Psoas muscle (tissue), 8 donors: ENCODE measurements at regions of chr5 and their contacts with region 1.

Region 1: GRCh38 chr5:124453221-124454051 is 293.0 kb downstream of the ZNF608 start:
- DNase-seq: no peak
- ATAC-seq: no peak
- H3K4me3 ChIP-seq: no peak overlapping the region
- H3K27ac ChIP-seq: no peak overlapping the region
- H3K4me1 ChIP-seq: no peaks in the 10 kb centered on the region
- H3K27me3 ChIP-seq: no peaks in the 10 kb centered on the region
- CTCF ChIP-seq: no peak

Region 2: GRCh38 chr5:124157320-124157719 is 296.1 kb before region 1 on chr5:
- intact Hi-C with region 1: no loop called
- DNase-seq: no peak
- ATAC-seq: no peak
- H3K4me3 ChIP-seq: no peak overlapping the region
- H3K27ac ChIP-seq: no peak overlapping the region
- H3K4me1 ChIP-seq: peaks cover 7% of the 10 kb centered on the region
- H3K27me3 ChIP-seq: no peaks in the 10 kb centered on the region
- CTCF ChIP-seq: no peak

Region 3: GRCh38 chr5:124519396-124519795 is 66.0 kb after region 1 on chr5:
- intact Hi-C with region 1: no loop called
- DNase-seq: no peak
- ATAC-seq: peak; percentile 94 to 100 (median 98)
- H3K4me3 ChIP-seq: no peak overlapping the region
- H3K27ac ChIP-seq: peak overlapping the region; percentile 43
- H3K4me1 ChIP-seq: peaks cover 16% of the 10 kb centered on the region
- H3K27me3 ChIP-seq: no peaks in the 10 kb centered on the region
- CTCF ChIP-seq: no peak

Region 4: GRCh38 chr5:124605541-124605940 is 152.1 kb after region 1 on chr5:
- intact Hi-C with region 1: loop called in 1 of 2 experiments (anchors 2 kb)
- DNase-seq: peak; percentile 35 to 59
- ATAC-seq: peak; percentile 54 to 88 (median 82)
- H3K4me3 ChIP-seq: no peak overlapping the region
- H3K27ac ChIP-seq: peak overlapping the region; percentile 71
- H3K4me1 ChIP-seq: peaks cover 27% of the 10 kb centered on the region
- H3K27me3 ChIP-seq: no peaks in the 10 kb centered on the region
- CTCF ChIP-seq: no peak